ENCODE measurements at regions of chr16 and their contacts with region 1.

Region 1: DNA sequence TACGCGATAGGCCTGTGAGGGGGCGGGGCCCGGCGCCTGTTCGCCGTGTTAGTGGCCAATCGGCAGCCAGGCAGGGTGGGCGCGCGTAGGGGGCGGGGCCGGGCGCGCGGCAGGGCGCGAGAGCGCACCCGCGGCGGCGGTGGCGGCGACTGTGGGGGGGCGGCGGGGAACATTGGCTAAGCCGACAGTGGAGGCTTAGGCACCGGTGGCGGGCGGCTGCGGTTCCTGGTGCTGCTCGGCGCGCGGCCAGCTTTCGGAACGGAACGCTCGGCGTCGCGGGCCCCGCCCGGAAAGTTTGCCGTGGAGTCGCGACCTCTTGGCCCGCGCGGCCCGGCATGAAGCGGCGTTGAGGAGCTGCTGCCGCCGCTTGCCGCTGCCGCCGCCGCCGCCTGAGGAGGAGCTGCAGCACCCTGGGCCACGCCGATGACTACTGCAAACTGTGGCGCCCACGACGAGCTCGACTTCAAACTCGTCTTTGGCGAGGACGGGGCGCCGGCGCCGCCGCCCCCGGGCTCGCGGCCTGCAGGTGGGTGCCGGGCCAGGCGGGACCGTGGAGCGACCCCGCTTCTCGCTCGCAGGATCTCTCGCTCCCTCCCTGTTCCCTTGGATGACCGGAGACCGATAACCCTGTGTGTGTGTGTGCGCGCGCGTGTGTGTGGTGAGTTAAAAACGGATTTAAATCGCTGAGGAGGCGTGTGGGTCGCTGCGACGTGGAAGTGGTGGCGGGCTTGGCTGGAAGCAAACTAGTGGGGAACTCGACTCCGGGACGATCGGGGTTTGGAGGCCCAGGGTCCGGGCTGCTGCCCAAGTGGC is at the start of gene NFATC3:
- DNase-seq: peak; percentile 94
- ATAC-seq: peak; percentile 89
- H3K4me3 ChIP-seq: peak within 1 kb of the TSS; percentile 99
- H3K27ac ChIP-seq: peak within 1 kb of the TSS; percentile 95
- H3K4me1 ChIP-seq: peaks cover 12% of the 10 kb centered on the region
- H3K27me3 ChIP-seq: no peaks in the 10 kb centered on the region
- CTCF ChIP-seq: no peak
- POLR2A ChIP-seq: 0 out of 2 replicates have a peak, but pooled peaks have one; percentile 43
- RAD21 ChIP-seq: no peak
- total RNA-seq, gene NFATC3: 14.7 and 21.5 TPM in 2 replicates

Region 2: GRCh38 chr16:68064791-68065365 is 20.6 kb before region 1 on chr16:
- CTCF ChIA-PET with region 1: interaction called, 10 read pairs
- POLR2A ChIA-PET with region 1: no interaction called
- dilution Hi-C with region 1: no loop called
- in situ Hi-C with region 1: no loop called
- intact Hi-C with region 1: no loop called
- DNase-seq: peak; percentile 91
- ATAC-seq: peak; percentile 86
- H3K4me3 ChIP-seq: no peak overlapping the region
- H3K27ac ChIP-seq: peak overlapping the region; percentile 62
- H3K4me1 ChIP-seq: peaks cover 16% of the 10 kb centered on the region
- H3K27me3 ChIP-seq: no peaks in the 10 kb centered on the region
- CTCF ChIP-seq: peak; percentile 88
- POLR2A ChIP-seq: no peak
- RAD21 ChIP-seq: peak; percentile 65

Region 3: GRCh38 chr16:68116256-68116867 is 30.9 kb after region 1 on chr16:
- CTCF ChIA-PET with region 1: interaction called, 3 read pairs
- POLR2A ChIA-PET with region 1: interaction called, 3 read pairs
- dilution Hi-C with region 1: no loop called
- in situ Hi-C with region 1: no loop called
- intact Hi-C with region 1: loop called (anchors 2 kb)
- DNase-seq: peak; percentile 51
- ATAC-seq: peak; percentile 59; the same call in 1 of the 2 replicates
- H3K4me3 ChIP-seq: no peak overlapping the region
- H3K27ac ChIP-seq: no peak overlapping the region
- H3K4me1 ChIP-seq: no peaks in the 10 kb centered on the region
- H3K27me3 ChIP-seq: no peaks in the 10 kb centered on the region
- CTCF ChIP-seq: peak; percentile 46
- POLR2A ChIP-seq: no peak
- RAD21 ChIP-seq: peak; percentile 41

Measured in IMR-90 (cell line).